SK-MEL-5 (cell line): ENCODE measurements at regions of chr15 and their contacts with region 1.

Region 1: GRCh38 chr15:63630036-63630751 is 33.0 kb downstream of the FBXL22 start:
- DNase-seq: no peak

Region 2: GRCh38 chr15:63466378-63467192 is 163.6 kb before region 1 on chr15:
- in situ Hi-C with region 1: no loop called
- DNase-seq: peak; percentile 73

Region 3: GRCh38 chr15:63487076-63487757 is 143.0 kb before region 1 on chr15:
- in situ Hi-C with region 1: no loop called
- DNase-seq: peak; percentile 84

Region 4: GRCh38 chr15:63600616-63601025 is 29.6 kb before region 1 on chr15:
- in situ Hi-C with region 1: no loop called
- DNase-seq: peak; percentile 91

Region 5: DNA sequence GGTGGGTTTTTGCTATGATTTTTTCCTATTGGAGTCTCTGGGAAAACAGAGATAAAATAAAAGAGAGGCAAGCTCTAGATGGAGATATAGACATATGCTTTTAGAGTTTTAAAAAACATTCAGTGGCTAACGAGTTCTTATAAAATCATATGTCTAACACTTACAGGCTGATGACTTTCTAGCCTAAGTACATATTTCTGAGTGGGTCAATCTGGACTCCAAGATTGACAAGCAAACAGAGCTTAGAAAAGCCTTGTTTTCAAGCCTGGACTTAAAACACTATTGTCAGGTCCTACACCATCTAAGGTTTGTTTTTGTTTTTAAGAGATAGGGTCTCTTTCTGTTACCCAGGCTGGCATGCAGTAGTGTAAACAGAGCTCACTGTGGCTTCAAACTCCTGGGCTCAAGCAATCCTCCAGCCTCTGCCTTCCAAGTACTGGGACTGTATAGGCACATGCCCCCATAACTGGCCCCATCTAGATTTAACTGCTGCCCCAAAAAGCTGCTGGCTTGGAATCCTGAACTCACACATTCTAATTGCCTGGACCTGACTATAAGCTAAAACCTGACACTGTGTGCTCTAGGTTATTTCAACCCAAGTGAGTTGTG is 53.3 kb after region 1 on chr15:
- in situ Hi-C with region 1: loop called (anchors 10 kb)
- DNase-seq: no peak